PC-9 (cell line): ENCODE measurements at regions of chr12 and their contacts with region 1.

Region 1: GRCh38 chr12:3261782-3262359 is 184.7 kb downstream of the TSPAN9 start:
- DNase-seq: no peak
- H3K4me3 ChIP-seq: no peak overlapping the region
- H3K27ac ChIP-seq: no peak overlapping the region
- H3K4me1 ChIP-seq: no peaks in the 10 kb centered on the region
- H3K27me3 ChIP-seq: peaks cover 14% of the 10 kb centered on the region; the same call in 1 of the 2 replicates
- CTCF ChIP-seq: no peak

Region 2: DNA sequence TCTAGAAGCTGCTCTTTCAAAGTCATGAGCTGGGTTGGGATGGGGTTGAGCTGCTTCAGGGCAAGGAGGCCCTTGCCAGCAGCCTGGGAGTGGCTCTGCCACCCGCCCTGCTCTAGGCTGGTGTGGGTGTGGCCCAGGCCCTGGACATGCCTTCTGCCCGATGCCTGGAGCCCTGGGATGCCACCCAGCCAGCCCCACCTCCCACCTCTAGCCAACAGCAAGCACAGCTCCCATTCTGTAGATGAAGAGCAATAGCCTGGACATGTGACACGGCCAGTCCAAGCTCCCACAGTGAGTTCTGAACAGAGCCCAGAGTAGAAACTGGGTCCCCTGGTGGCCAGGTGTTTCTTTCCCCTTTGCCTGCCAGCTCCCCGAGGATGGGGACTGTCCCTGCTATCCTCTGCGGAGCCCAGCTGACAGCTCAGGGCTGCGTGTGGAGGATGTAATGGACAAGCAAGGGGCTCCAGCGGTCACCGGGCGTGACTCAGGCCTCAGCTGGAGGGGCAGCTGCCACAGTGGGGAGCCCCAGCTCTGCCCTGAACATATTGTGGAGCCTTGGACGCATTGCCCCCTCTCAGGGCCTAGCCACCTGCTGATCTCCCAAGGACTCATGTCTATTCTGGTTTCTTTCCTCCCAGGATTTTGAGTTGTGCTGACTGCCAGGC is 19.5 kb before region 1 on chr12:
- CTCF ChIA-PET with region 1: no interaction called
- POLR2A ChIA-PET with region 1: interaction called, 28 read pairs
- intact Hi-C with region 1: no loop called
- DNase-seq: peak in 1 of 2 experiments; percentile 63
- H3K4me3 ChIP-seq: no peak overlapping the region
- H3K27ac ChIP-seq: no peak overlapping the region
- H3K4me1 ChIP-seq: no peaks in the 10 kb centered on the region
- H3K27me3 ChIP-seq: peaks cover 25% of the 10 kb centered on the region
- CTCF ChIP-seq: no peak